CD8-positive, alpha-beta T cell (primary cell): ENCODE measurements at regions of chr11 and their contacts with region 1.

Region 1: DNA sequence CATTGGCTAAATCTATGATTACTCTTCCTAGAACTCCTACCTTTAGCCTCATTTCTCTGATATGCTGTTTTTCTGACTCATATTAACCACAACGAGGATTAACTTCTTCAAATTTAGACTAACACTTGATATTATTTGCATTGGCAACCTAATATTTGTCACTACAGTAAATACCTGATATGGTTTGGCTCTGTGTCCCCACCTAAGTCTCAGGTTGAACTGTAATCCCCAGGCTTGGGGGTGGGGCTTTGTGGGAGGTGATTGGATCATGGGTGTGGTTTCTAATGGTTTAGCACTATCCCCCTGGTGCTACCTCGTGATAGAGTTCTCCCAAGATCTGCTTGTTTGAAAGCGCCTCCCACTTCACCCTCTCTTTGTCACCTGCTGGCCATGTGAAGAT is 17.1 kb upstream of the MED17 start:
- DNase-seq: no peak
- ATAC-seq: no peak
- H3K4me3 ChIP-seq: no peak overlapping the region
- H3K4me3 Mint-ChIP-seq: no peak overlapping the region
- H3K27ac ChIP-seq: no peak overlapping the region
- H3K27ac Mint-ChIP-seq: no peak overlapping the region
- H3K4me1 ChIP-seq: no peaks in the 10 kb centered on the region
- H3K4me1 Mint-ChIP-seq: no peaks in the 10 kb centered on the region
- H3K27me3 ChIP-seq: no peaks in the 10 kb centered on the region
- H3K27me3 Mint-ChIP-seq: no peaks in the 10 kb centered on the region
- CTCF ChIP-seq: no peak

Region 2: GRCh38 chr11:93751001-93751400 is 16.0 kb before region 1 on chr11:
- CTCF ChIA-PET with region 1: no interaction called
- POLR2A ChIA-PET with region 1: no interaction called
- intact Hi-C with region 1: loop called in 1 of 2 experiments (anchors 2 kb)
- DNase-seq: no peak
- ATAC-seq: no peak
- H3K4me3 ChIP-seq: no peak overlapping the region
- H3K4me3 Mint-ChIP-seq: no peak overlapping the region
- H3K27ac ChIP-seq: no peak overlapping the region
- H3K27ac Mint-ChIP-seq: no peak overlapping the region
- H3K4me1 ChIP-seq: no peaks in the 10 kb centered on the region
- H3K4me1 Mint-ChIP-seq: peaks cover 8% of the 10 kb centered on the region
- H3K27me3 ChIP-seq: no peaks in the 10 kb centered on the region
- H3K27me3 Mint-ChIP-seq: no peaks in the 10 kb centered on the region
- CTCF ChIP-seq: no peak